HEK293 (cell line): ENCODE measurements at regions of chr15 and their contacts with region 1.

Region 1: GRCh38 chr15:78540141-78540928 is at the start of gene PSMA4:
- H3K4me3 ChIP-seq: peak within 1 kb of the TSS; percentile 93
- H3K27ac ChIP-seq: peak within 1 kb of the TSS; percentile 95
- H3K4me1 ChIP-seq: peaks cover 10% of the 10 kb centered on the region; the same call in 1 of the 2 replicates
- CTCF ChIP-seq: peak; percentile 19

Region 2: DNA sequence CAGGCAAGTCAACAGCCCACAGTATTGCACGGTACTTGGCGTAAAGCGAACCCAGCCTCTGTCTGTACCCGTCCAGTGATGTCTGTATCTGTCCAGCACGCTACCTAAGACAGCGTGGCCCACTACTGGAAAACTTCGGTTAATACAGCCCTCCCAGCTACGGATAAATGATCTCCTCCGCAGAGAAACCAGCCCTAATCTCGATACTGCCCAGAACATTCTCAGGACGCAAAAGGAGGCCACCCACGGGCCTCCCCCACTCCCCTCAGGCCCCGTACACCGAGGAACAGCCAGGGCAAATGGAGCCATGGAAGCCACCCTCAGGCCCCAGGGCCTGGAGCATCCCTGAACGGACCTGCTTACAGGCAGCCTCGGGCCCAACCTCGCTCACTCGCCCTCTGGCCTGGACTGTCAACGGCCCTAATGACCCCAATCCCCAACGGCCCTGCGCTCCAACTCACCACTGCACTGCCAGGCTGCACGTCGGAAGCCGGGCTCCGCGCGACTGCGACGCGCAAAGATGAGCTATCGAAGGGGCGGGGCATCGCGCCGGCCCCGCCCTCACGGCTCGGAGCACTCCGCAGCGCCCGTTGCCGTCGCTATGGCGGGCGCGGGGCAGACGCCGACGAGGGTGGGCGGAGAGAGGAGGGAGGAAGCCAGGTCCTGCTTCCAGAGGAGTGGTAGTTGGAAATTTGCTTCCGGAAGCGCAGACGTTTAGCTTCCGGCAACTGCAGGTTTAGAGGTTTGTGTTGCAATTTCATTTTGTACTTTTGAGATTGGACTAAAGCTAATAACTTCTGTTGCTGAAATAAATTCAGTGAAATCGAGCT is 241.0 kb before region 1 on chr15 and contains the start of gene SKIC8:
- CTCF ChIA-PET with region 1: no interaction called
- POLR2A ChIA-PET with region 1: interaction called, 12 read pairs
- H3K4me3 ChIP-seq: peak within 1 kb of the TSS; percentile 87
- H3K27ac ChIP-seq: peak within 1 kb of the TSS; percentile 63
- H3K4me1 ChIP-seq: no peaks in the 10 kb centered on the region
- CTCF ChIP-seq: peak; percentile 56; the same call in 1 of the 2 replicates

Region 3: DNA sequence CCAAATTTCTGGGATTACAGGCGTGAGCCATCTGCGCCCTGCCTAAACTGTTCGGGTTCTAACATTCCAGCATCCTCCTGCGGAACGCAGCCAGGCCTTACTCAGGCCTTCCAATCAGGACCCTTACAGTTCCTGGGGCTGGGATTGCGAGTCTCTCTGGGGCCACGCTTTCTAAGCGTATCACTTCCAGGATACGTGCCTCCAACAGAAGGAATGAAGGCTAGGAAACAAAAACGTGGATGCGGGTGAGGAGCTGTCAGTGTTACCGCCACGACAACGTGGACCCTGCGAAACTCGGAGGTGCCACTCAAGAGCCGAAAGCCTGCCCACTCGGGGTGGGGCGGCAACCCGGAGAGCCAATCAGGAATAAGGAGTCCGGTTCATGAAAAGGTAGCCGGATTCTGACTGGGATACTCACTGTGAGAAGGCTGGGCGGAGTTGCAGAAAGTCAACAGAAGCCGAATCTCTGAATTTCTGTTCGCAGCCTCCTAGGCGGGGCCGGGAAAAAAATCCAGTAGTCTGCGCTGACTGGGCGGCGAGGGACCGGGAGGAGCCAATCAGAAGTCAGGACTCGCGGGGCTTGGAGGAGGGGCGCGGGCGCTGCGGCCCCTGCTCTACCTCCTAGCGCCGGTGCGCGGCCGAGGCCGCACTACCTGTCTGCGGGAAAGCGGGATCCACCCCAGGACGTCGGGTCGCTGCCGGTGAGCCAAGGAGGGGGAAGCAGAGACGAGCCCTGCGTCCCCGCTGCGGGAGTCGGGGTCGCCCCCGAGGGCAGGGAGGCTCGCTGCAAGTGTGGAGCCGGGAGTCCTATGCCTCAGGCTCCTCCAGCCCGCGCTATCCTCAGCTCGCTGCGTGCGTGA is 33.1 kb before region 1 on chr15 and contains the start of gene HYKK:
- CTCF ChIA-PET with region 1: no interaction called
- POLR2A ChIA-PET with region 1: interaction called, 31 read pairs
- H3K4me3 ChIP-seq: peak within 1 kb of the TSS; percentile 99
- H3K27ac ChIP-seq: peak within 1 kb of the TSS; percentile 14; the same call in 1 of the 2 replicates
- H3K4me1 ChIP-seq: 0 out of 2 replicates have a peak, but pooled peaks cover 4% of the 10 kb centered on the region
- CTCF ChIP-seq: peak; percentile 73

Region 4: GRCh38 chr15:78552597-78552996 is 12.3 kb after region 1 on chr15:
- CTCF ChIA-PET with region 1: interaction called, 4 read pairs
- POLR2A ChIA-PET with region 1: interaction called, 23 read pairs
- H3K4me3 ChIP-seq: no peak overlapping the region
- H3K27ac ChIP-seq: no peak overlapping the region
- H3K4me1 ChIP-seq: no peaks in the 10 kb centered on the region
- CTCF ChIP-seq: no peak

Region 5: GRCh38 chr15:78565097-78565951 is 25.0 kb after region 1 on chr15 and contains the start of gene CHRNA5:
- CTCF ChIA-PET with region 1: interaction called, 5 read pairs
- POLR2A ChIA-PET with region 1: interaction called, 78 read pairs
- H3K4me3 ChIP-seq: peak within 1 kb of the TSS; percentile 57
- H3K27ac ChIP-seq: peak within 1 kb of the TSS; percentile 93
- H3K4me1 ChIP-seq: peaks cover 4% of the 10 kb centered on the region; the same call in 1 of the 2 replicates
- CTCF ChIP-seq: no peak

Region 6: GRCh38 chr15:79091204-79091867 is 551.0 kb after region 1 on chr15:
- CTCF ChIA-PET with region 1: no interaction called
- POLR2A ChIA-PET with region 1: no interaction called
- H3K4me3 ChIP-seq: peak overlapping the region; percentile 3
- H3K27ac ChIP-seq: no peak overlapping the region; the same call in 1 of the 2 replicates
- H3K4me1 ChIP-seq: peaks cover 6% of the 10 kb centered on the region; the same call in 1 of the 2 replicates
- CTCF ChIP-seq: no peak